ENCODE measurements at regions of chr14 and their contacts with region 1.

Region 1: GRCh38 chr14:55354500-55354899 is 57.1 kb downstream of the ATG14 start:
- DNase-seq: peak; percentile 63
- CTCF ChIP-seq: peak; percentile 77

Region 2: DNA sequence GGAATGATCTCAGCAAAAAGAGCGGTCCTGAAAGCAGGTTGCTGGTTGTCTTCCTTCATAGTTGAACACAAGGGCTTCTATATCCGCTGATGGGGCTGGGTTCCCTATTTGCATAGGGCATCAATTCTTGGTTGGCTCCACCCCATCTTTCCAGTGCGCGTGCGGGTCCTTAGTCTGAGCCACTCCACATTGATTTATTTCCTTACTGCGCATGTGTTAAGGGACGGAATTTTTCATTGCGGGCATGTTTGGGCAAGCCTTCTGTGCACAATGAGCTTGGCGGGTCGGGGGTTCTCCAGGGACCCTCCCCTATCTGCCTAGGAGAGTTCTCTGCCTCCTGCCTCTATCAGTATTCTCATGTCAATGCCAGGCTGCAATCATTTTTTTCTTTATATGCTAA is 141.9 kb before region 1 on chr14:
- CTCF ChIA-PET with region 1: interaction called, 33 read pairs
- POLR2A ChIA-PET with region 1: no interaction called
- DNase-seq: no peak
- CTCF ChIP-seq: no peak

Region 3: GRCh38 chr14:55270832-55271565 is 83.5 kb before region 1 on chr14 and contains the start of gene FBXO34:
- CTCF ChIA-PET with region 1: interaction called, 56 read pairs
- POLR2A ChIA-PET with region 1: interaction called, 3 read pairs
- DNase-seq: peak; percentile 96
- CTCF ChIP-seq: peak; percentile 99

Region 4: DNA sequence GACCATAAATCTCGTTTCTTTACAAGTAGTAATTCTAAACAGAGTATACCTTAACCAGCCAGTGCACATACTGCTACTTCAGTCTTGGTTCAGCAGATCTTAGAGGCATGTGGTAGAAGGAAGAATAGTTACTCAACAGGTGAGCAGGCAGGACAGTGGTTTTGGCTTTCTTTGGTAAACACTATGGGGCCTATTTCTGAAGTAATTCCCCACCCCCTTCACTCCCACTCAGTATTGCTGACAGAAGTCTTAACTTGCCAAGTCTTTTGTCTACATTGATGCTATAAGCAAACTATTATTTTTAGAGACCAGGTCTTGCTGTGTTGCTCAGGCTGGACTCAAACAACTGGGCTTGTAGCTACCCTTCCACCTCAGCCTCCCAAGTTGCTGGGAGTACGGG is 14.7 kb before region 1 on chr14:
- CTCF ChIA-PET with region 1: interaction called, 16 read pairs
- POLR2A ChIA-PET with region 1: no interaction called
- DNase-seq: peak; percentile 43
- CTCF ChIP-seq: no peak

Region 5: DNA sequence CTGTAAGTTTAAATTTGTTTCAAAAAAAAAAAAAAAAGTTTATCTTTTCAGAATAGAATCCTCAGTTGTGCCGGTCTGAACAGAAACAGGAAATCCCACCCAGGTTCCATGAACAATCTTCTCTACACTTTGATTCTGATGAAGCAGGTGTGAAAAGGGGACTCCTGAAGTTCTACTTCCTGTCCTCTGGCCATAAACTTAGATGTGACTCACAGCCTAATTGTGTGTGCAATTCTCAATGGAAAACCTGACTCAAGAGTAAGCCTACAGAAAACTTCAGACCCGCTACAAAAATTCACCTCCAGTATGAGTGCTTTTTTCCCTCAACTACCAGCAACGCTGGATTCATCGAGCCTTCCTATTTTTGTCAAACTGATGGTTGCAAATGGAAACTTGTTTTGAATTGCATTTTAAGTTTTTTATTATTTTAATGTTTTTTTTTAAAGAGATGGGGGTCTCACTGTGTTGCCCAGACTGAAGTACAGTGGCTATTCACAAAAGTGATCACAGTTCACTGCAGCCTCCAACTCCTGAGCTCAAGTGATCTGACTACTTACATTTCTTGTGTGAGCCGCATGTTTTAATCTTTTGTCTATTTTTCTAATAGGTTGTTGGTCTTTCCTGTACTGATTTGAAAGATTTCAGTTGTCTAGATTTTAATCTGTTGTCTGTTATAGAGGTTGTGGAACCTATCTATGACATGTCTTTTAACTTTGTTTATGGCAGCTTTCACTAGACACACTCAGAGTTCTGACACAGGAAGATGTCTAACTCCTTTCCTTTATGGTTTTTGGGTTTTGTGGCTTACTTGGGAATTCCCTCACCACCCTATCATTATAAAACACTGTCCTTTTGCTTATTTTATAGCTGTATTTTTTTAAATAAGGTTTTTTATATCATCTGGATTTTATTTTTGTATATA is 19.5 kb after region 1 on chr14:
- CTCF ChIA-PET with region 1: interaction called, 27 read pairs
- POLR2A ChIA-PET with region 1: no interaction called
- DNase-seq: peak; percentile 57
- CTCF ChIP-seq: no peak